CD8-positive, alpha-beta T cell (primary cell): ENCODE measurements at regions of chr17 and their contacts with region 1.

Region 1: DNA sequence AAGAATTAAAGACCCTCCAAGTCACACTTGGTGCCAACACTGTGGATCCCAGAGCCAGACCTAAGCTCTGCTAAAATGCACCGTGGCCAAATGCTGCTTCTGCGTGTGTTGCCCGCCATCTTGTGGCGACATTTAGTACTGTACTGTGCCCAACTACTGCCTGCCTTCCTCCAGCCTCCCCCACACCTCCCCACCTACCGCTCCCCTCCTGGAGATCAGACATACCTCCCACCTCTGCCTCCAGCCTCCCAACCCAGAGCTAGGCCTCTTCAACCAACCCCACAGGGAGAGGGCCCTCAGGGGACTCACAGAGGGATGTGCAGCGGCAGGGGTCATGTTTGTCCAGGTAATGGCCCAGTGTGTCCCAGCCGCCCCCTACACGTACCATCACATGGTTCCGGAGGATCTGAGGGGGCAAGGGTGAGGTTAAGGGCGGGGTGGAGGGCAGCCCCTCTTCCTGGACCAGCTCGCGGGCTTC is 5.5 kb downstream of the GAS2L2 start:
- DNase-seq: peak; percentile 62 to 86 (median 80)
- ATAC-seq: peak; percentile 99
- H3K4me3 ChIP-seq: no peak overlapping the region
- H3K4me3 Mint-ChIP-seq: no peak overlapping the region
- H3K27ac ChIP-seq: no peak overlapping the region
- H3K27ac Mint-ChIP-seq: no peak overlapping the region
- H3K4me1 ChIP-seq: peaks cover 7% of the 10 kb centered on the region
- H3K4me1 Mint-ChIP-seq: peaks cover 7% of the 10 kb centered on the region
- H3K27me3 ChIP-seq: peaks cover 17% of the 10 kb centered on the region in 2 experiments
- H3K27me3 Mint-ChIP-seq: peaks cover 49% of the 10 kb centered on the region
- CTCF ChIP-seq: peak; percentile 84

Region 2: GRCh38 chr17:34542700-34543336 is 1204.8 kb before region 1 on chr17:
- CTCF ChIA-PET with region 1: interaction called, 4 read pairs
- POLR2A ChIA-PET with region 1: no interaction called
- intact Hi-C with region 1: loop called (anchors 2 kb)
- DNase-seq: peak in 8 of 9 experiments; percentile 16 to 71 (median 59)
- ATAC-seq: no peak
- H3K4me3 ChIP-seq: no peak overlapping the region
- H3K4me3 Mint-ChIP-seq: no peak overlapping the region
- H3K27ac ChIP-seq: no peak overlapping the region
- H3K27ac Mint-ChIP-seq: no peak overlapping the region
- H3K4me1 ChIP-seq: no peaks in the 10 kb centered on the region
- H3K4me1 Mint-ChIP-seq: no peaks in the 10 kb centered on the region
- H3K27me3 ChIP-seq: no peaks in the 10 kb centered on the region
- H3K27me3 Mint-ChIP-seq: peaks cover 32% of the 10 kb centered on the region
- CTCF ChIP-seq: peak; percentile 71

Region 3: DNA sequence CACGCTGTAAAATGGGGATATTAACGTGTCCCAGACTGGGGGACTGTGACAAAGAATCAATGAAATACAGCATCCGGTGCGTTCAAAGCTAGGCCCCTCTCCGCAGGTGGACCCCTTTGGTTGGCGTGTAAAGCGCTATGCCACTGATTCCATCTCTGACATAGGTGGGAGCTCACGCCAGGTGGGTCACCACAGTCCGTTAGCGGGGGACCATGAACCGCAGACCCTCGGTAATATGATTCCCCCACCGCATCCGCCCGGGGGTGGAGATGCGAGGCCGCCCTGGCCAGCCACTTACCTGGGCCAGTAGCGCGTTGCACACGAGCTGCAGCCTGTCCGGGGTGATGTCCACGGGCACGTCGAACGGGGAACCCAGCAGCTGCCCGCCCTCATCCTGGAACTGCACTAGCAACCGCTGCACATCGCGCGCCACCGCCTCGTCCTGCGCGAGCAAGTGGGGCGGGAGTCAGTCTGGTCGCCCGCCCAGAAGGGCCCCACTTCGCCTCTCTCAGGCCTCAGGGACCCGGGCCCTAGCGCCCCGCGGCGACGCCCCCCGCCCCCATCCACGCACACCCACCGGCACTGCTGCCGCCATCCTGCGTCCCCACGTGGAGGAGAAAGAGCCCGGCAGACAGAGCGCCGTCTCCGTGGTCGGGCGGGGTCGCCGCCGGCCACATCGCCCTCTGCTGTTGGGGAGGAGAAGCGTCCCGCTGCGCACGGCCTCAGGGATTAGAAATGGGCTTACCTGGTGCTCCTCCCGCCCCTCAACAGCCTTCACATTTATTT is 605.7 kb before region 1 on chr17 and contains the start of gene NLE1:
- CTCF ChIA-PET with region 1: interaction called, 10 read pairs
- POLR2A ChIA-PET with region 1: no interaction called
- intact Hi-C with region 1: loop called (anchors 1 to 2 kb)
- DNase-seq: peak; percentile 82 to 93 (median 88)
- ATAC-seq: peak; percentile 97
- H3K4me3 ChIP-seq: peak within 1 kb of the TSS; percentile 98 to 99
- H3K4me3 Mint-ChIP-seq: peak within 1 kb of the TSS; percentile 85
- H3K27ac ChIP-seq: peak within 1 kb of the TSS; percentile 54 to 72
- H3K27ac Mint-ChIP-seq: peak within 1 kb of the TSS; percentile 76
- H3K4me1 ChIP-seq: peaks cover 8% of the 10 kb centered on the region
- H3K4me1 Mint-ChIP-seq: peaks cover 17% of the 10 kb centered on the region
- H3K27me3 ChIP-seq: no peaks in the 10 kb centered on the region
- H3K27me3 Mint-ChIP-seq: no peaks in the 10 kb centered on the region
- CTCF ChIP-seq: peak; percentile 97
- total RNA-seq, gene NLE1: 9.4 to 11.3 TPM

Region 4: GRCh38 chr17:35555695-35556094 is 191.9 kb before region 1 on chr17:
- CTCF ChIA-PET with region 1: no interaction called
- POLR2A ChIA-PET with region 1: no interaction called
- intact Hi-C with region 1: loop called in 1 of 2 experiments (anchors 5 kb)
- DNase-seq: peak in 2 of 9 experiments; percentile 24 to 42
- ATAC-seq: no peak
- H3K4me3 ChIP-seq: no peak overlapping the region
- H3K4me3 Mint-ChIP-seq: no peak overlapping the region
- H3K27ac ChIP-seq: no peak overlapping the region
- H3K27ac Mint-ChIP-seq: no peak overlapping the region
- H3K4me1 ChIP-seq: no peaks in the 10 kb centered on the region
- H3K4me1 Mint-ChIP-seq: no peaks in the 10 kb centered on the region
- H3K27me3 ChIP-seq: no peaks in the 10 kb centered on the region
- H3K27me3 Mint-ChIP-seq: no peaks in the 10 kb centered on the region
- CTCF ChIP-seq: no peak

Region 5: GRCh38 chr17:35764123-35764991 is 16.8 kb after region 1 on chr17:
- CTCF ChIA-PET with region 1: interaction called, 27 read pairs
- POLR2A ChIA-PET with region 1: interaction called, 3 read pairs
- intact Hi-C with region 1: no loop called
- DNase-seq: peak; percentile 67 to 95 (median 86)
- ATAC-seq: peak; percentile 89
- H3K4me3 ChIP-seq: peak overlapping the region; percentile 70 to 86
- H3K4me3 Mint-ChIP-seq: peak overlapping the region; percentile 91
- H3K27ac ChIP-seq: peak overlapping the region; percentile 16 to 65
- H3K27ac Mint-ChIP-seq: peak overlapping the region; percentile 87
- H3K4me1 ChIP-seq: peaks cover 8% of the 10 kb centered on the region
- H3K4me1 Mint-ChIP-seq: peaks cover 10% of the 10 kb centered on the region
- H3K27me3 ChIP-seq: no peaks in the 10 kb centered on the region
- H3K27me3 Mint-ChIP-seq: no peaks in the 10 kb centered on the region
- CTCF ChIP-seq: peak; percentile 58